Panc1 (cell line): ENCODE measurements at regions of chr6 and their contacts with region 1.

Region 1: GRCh38 chr6:75572072-75572471 is 29.6 kb upstream of the SENP6 start:
- DNase-seq: no peak
- ATAC-seq: no peak
- H3K4me3 ChIP-seq: no peak overlapping the region
- H3K27ac ChIP-seq: no peak overlapping the region
- H3K4me1 ChIP-seq: no peaks in the 10 kb centered on the region
- H3K27me3 ChIP-seq: no peaks in the 10 kb centered on the region
- CTCF ChIP-seq: no peak

Region 2: DNA sequence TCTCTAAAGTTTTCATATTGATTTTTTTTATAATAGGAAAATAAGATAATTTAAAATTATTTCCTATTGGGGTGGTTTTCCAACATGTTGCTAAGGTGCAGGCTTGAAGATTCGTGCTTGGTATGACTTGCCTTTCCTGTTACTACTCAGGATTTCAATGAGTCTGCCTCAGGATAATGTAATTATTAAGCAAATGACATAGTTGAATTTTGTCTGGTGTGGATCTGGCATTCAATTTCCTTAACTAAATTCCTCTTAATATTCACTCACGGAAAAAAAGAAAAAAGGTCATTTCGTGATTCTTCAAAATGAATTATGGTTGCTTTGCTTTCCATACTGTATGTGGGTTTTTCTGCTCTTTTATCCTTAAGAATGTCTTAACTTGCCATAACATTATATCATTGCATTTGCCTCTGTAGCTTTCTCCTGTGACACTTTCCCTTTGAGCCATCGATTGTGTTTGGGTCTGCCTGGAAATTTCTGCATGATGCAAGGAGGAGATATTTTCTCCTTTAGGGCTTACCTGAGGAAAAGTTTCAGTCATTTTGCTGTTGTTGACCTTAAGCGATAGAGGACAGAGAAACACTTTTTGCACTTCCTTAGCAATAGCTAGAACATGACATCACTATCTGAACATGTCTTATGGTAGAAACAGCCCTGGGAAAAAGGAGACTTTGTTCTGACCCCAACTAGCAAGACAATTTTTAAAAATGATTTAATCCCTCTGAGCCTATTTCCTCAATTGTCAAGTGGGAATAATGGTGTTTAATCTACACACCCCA is 69.0 kb before region 1 on chr6:
- CTCF ChIA-PET with region 1: interaction called, 15 read pairs
- POLR2A ChIA-PET with region 1: no interaction called
- in situ Hi-C with region 1: no loop called
- intact Hi-C with region 1: no loop called
- DNase-seq: no peak
- ATAC-seq: no peak
- H3K4me3 ChIP-seq: no peak overlapping the region
- H3K27ac ChIP-seq: no peak overlapping the region
- H3K4me1 ChIP-seq: no peaks in the 10 kb centered on the region
- H3K27me3 ChIP-seq: no peaks in the 10 kb centered on the region
- CTCF ChIP-seq: no peak

Region 3: GRCh38 chr6:75550544-75551167 is 21.4 kb before region 1 on chr6:
- CTCF ChIA-PET with region 1: no interaction called
- POLR2A ChIA-PET with region 1: interaction called, 14 read pairs
- in situ Hi-C with region 1: no loop called
- intact Hi-C with region 1: no loop called
- DNase-seq: no peak
- ATAC-seq: no peak
- H3K4me3 ChIP-seq: no peak overlapping the region
- H3K27ac ChIP-seq: no peak overlapping the region
- H3K4me1 ChIP-seq: no peaks in the 10 kb centered on the region
- H3K27me3 ChIP-seq: no peaks in the 10 kb centered on the region
- CTCF ChIP-seq: no peak